Activated CD4-positive, alpha-beta T cell treated with anti-CD3 and anti-CD28 coated beads for 36 hours (primary cell): ENCODE measurements at regions of chr5 and their contacts with region 1.

Region 1: GRCh38 chr5:97127727-97128126 is 14.7 kb downstream of the LIX1 start:
- DNase-seq: no peak
- ATAC-seq: no peak
- H3K4me3 Mint-ChIP-seq: no peak overlapping the region
- H3K27ac Mint-ChIP-seq: no peak overlapping the region
- H3K4me1 Mint-ChIP-seq: no peaks in the 10 kb centered on the region
- H3K27me3 Mint-ChIP-seq: peaks cover 16% of the 10 kb centered on the region

Region 2: DNA sequence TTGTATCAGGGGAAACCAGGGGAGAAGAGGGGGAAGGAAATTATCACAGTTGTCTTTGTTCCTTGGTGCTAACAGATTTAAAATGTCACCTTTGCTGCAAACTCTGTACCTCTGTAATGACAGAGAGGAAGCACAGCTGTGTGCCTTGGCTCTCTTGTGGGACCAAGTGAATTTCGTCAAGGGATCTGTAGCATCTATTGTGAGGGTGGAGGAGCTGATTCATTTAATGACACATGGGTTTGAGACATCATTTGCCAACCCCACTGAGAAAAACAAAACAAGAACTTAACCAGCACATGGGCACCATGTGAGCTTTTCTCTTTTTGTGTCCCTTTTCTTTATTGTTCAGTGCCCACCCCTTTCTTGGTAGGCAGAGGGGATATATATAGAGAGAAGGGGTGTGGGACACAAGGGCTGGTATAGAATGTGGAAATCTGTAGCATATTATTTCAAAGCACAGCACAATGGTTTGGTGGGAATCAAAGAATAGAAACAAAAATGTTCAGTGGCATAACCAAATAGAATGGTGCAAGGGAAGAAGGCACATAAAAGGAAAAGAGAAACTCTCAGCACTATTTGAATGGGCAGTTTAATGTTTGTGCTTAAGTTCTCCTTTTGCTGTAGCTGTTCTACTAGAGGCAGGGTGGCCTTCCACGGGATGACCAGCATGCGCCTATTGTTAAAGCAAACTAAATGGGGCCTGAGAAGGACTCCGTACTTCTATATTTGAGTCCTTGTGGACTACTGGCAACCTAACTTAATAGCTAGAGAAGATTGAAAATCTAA is 48.6 kb before region 1 on chr5:
- CTCF ChIA-PET with region 1: no interaction called
- POLR2A ChIA-PET with region 1: no interaction called
- intact Hi-C with region 1: loop called in 1 of 2 experiments (anchors 5 kb)
- DNase-seq: peak; percentile 9
- ATAC-seq: peak; percentile 73
- H3K4me3 Mint-ChIP-seq: no peak overlapping the region
- H3K27ac Mint-ChIP-seq: no peak overlapping the region
- H3K4me1 Mint-ChIP-seq: peaks cover 14% of the 10 kb centered on the region
- H3K27me3 Mint-ChIP-seq: no peaks in the 10 kb centered on the region

Region 3: DNA sequence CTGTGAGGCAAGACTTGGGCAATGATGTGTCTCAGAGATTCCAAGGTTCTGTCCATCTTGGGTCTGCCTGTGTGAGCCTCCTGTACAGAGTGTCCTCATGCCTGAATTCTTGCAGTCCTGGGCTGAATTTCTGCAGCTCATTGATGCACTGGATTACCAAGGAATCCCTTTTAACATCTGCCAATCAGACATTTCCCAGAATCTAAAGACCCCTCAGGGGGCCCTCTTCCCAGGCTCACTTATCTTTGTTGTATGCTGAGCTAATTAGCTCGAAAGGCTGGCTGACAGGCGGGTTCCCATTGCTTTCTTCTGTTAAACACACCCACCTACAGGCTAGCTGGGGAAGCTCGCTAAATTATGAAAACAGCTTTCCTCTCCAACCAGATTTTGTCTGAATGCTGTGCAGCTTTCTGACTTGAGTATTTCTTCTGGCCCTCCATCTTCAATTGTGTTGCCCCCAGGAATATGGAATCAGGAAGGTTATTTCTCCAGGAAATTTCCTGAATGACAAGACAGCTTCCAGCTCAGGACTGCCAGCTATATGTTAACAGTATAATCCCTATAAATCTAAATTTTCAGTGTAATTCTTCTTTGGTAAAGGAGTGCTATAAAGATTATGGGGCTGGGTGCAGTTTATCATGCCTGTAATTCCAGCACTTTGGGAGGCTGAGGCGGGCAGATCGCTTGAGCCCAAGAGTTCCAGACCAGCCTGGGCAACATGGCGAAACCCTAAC is 15.0 kb after region 1 on chr5 and contains the start of gene LIX1:
- CTCF ChIA-PET with region 1: interaction called, 11 read pairs
- POLR2A ChIA-PET with region 1: no interaction called
- intact Hi-C with region 1: no loop called
- DNase-seq: peak; percentile 55
- ATAC-seq: peak; percentile 84
- H3K4me3 Mint-ChIP-seq: no peak within 1 kb of the TSS
- H3K27ac Mint-ChIP-seq: no peak within 1 kb of the TSS
- H3K4me1 Mint-ChIP-seq: no peaks in the 10 kb centered on the region
- H3K27me3 Mint-ChIP-seq: peaks cover 3% of the 10 kb centered on the region
- total RNA-seq, gene LIX1: not detected